ENCODE measurements at regions of chr18 and their contacts with region 1.

Region 1: DNA sequence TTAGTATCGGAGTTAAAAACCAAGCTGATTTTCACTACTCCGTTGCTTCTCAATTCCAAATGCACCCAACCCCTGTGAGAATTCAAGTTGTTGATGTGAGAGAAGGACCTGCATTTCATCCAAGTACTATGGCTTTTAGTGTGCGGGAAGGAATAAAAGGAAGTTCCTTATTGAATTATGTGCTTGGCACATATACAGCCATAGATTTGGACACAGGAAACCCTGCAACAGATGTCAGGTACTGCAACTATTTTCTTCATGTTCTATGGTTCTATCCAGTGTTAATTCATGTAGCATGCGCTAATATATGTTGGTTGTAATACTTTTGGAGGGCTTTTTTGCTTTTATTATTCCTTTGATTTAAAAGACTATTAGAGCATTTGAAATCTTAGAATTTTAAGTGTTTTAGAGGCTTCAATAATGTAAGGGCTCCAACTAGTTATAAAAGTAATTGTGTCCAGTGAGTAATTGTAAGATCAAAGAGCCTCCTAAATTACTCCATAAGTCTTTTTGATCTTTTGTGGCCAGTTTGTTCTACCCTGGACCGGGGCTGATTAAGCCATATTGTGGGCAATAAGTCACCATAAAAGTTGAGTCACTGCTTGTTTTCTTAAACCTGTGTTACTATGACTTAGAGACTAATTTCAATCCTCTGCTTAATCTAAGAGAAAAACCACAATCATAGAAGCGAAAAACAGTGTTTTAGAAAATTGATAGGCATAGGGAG is 22.9 kb downstream of the DSG4 start:
- DNase-seq: peak; percentile 16 to 31
- H3K4me3 ChIP-seq: no peak overlapping the region
- H3K4me3 Mint-ChIP-seq: no peak overlapping the region
- H3K27ac Mint-ChIP-seq: peak overlapping the region; percentile 48
- H3K4me1 ChIP-seq: peaks cover 24% of the 10 kb centered on the region
- H3K4me1 Mint-ChIP-seq: peaks cover 16% of the 10 kb centered on the region
- H3K27me3 ChIP-seq: no peaks in the 10 kb centered on the region
- H3K27me3 Mint-ChIP-seq: no peaks in the 10 kb centered on the region
- CTCF ChIP-seq: no peak

Region 2: GRCh38 chr18:31267823-31268481 is 131.5 kb before region 1 on chr18:
- CTCF ChIA-PET with region 1: no interaction called
- POLR2A ChIA-PET with region 1: no interaction called
- intact Hi-C with region 1: loop called (anchors 5 kb)
- DNase-seq: no peak
- H3K4me3 ChIP-seq: no peak overlapping the region
- H3K4me3 Mint-ChIP-seq: no peak overlapping the region
- H3K27ac Mint-ChIP-seq: no peak overlapping the region
- H3K4me1 ChIP-seq: peaks cover 8% of the 10 kb centered on the region; the same call in 1 of the 2 replicates
- H3K4me1 Mint-ChIP-seq: peaks cover 21% of the 10 kb centered on the region
- H3K27me3 ChIP-seq: no peaks in the 10 kb centered on the region
- H3K27me3 Mint-ChIP-seq: no peaks in the 10 kb centered on the region
- CTCF ChIP-seq: no peak

Region 3: GRCh38 chr18:31526374-31526773 is 126.9 kb after region 1 on chr18:
- CTCF ChIA-PET with region 1: no interaction called
- POLR2A ChIA-PET with region 1: no interaction called
- intact Hi-C with region 1: no loop called
- DNase-seq: no peak
- H3K4me3 ChIP-seq: no peak overlapping the region
- H3K4me3 Mint-ChIP-seq: no peak overlapping the region
- H3K27ac Mint-ChIP-seq: no peak overlapping the region
- H3K4me1 ChIP-seq: no peaks in the 10 kb centered on the region
- H3K4me1 Mint-ChIP-seq: no peaks in the 10 kb centered on the region
- H3K27me3 ChIP-seq: no peaks in the 10 kb centered on the region
- H3K27me3 Mint-ChIP-seq: no peaks in the 10 kb centered on the region
- CTCF ChIP-seq: no peak

Measured in Caco-2 (cell line).